ENCODE measurements at regions of chr19 and their contacts with region 1.

Region 1: DNA sequence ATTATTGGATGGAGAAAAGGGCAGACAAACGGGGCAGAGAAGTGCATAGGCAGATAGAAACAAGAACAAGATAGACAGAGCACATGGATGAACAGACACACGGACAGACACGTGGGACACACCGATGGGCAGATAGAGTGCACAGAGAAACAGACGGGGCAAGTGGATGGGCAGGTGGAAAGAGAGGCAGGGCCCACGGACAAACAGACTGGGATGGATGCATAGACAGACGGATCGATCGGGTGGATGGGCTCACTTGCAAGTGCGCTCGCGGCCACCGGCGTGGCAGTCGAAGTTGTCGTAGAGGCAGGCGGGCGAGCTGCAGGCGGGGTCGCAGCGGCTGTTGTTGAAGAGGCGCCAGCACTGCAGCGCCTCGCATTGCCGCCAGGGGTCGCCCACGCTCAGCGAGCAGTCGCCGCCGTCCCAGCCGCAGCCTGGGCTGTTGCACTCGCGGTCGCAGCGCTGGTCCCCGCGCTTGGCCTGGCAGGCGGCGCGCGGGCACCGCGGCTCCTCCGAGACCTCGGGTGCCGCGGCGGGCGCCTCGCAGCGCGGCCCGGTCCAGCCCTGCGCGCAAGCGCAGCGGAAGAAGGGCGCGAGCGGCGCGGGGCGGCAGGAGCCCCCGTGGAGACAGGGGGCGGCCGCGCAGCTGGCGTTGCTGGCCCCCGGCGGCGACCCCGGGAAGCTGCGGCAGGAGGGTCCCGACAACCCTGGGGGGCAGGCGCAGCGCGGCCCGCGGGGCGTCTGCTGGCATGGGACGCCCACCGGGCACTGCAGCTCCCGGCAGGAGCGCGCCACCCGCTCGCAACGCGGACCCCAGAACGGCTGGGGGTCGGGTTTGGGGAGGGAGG is 23.3 kb downstream of the NOTCH3 start:
- DNase-seq: peak; percentile 84
- H3K4me3 Mint-ChIP-seq: peak overlapping the region; percentile 24
- H3K27ac Mint-ChIP-seq: no peak overlapping the region
- H3K4me1 Mint-ChIP-seq: peaks cover 2% of the 10 kb centered on the region
- H3K27me3 Mint-ChIP-seq: peaks cover 3% of the 10 kb centered on the region

Region 2: DNA sequence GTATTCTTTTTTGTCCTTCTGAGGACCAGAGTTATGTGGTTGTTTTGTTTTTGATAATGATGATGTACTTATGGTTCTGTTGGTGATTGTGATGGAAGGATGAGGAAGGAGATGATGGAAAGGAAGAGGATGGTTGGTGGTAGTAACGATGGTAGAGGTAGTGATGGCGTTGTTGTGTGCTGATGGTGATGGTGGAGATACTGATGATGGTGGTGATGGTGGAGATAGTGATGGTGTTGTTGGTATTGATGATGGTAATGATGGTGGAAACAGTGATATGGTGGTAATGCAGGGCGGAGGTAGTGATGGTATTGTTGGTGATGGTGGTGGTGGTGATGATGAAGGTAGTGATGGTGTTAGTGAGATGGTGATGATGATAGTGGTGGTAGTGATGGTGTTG is 582.0 kb before region 1 on chr19:
- CTCF ChIA-PET with region 1: no interaction called
- intact Hi-C with region 1: no loop called
- DNase-seq: no peak
- H3K4me3 Mint-ChIP-seq: no peak overlapping the region
- H3K27ac Mint-ChIP-seq: no peak overlapping the region
- H3K4me1 Mint-ChIP-seq: no peaks in the 10 kb centered on the region
- H3K27me3 Mint-ChIP-seq: peaks cover 4% of the 10 kb centered on the region

Region 3: DNA sequence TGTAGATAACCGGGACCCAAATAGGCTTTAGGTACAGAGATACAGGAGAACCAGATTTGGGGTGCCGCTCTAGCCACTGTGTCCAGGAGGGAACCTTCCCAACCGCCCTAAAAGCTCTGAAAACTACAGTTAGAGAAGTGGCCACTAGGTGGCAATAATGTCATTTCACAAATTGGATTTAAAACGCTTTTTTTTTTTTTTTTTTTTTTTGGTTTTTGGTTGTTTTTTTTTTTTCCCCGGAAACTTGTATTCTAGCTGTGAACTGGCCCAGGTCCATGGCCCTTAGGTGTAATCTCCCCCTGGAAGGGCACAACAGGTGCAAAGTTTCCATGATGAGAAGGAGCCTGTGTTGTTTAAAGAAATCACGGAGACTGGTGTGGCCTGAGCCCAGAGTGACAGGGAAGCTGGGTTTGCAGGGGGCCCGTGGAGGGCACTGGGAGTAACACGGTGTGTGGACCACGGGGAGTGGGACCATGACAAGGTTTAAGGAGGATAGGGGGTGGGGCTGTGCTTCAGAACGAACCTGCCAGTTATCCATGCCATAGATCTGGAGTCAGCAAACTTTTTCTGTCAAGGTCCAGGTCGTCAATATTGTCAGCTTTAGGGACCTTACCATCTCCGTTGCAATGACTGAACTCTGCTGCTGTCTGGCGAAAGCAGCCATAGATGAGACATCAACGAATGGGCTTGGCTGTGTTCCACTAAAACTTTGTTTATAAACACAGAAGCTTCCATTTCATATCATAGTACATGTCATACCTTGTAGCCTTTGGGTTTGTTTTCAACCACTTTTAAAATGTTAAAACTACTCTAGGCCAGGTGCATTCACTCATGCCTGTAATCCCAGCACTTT is 85.4 kb before region 1 on chr19:
- CTCF ChIA-PET with region 1: interaction called, 5 read pairs
- intact Hi-C with region 1: loop called (anchors 5 kb)
- DNase-seq: peak; percentile 61
- H3K4me3 Mint-ChIP-seq: no peak overlapping the region
- H3K27ac Mint-ChIP-seq: no peak overlapping the region
- H3K4me1 Mint-ChIP-seq: peaks cover 2% of the 10 kb centered on the region
- H3K27me3 Mint-ChIP-seq: peaks cover 8% of the 10 kb centered on the region

Region 4: GRCh38 chr19:15188851-15189250 is 11.4 kb after region 1 on chr19:
- CTCF ChIA-PET with region 1: interaction called, 4 read pairs
- intact Hi-C with region 1: loop called (anchors 1 kb)
- DNase-seq: no peak
- H3K4me3 Mint-ChIP-seq: no peak overlapping the region
- H3K27ac Mint-ChIP-seq: no peak overlapping the region
- H3K4me1 Mint-ChIP-seq: no peaks in the 10 kb centered on the region
- H3K27me3 Mint-ChIP-seq: peaks cover 11% of the 10 kb centered on the region

Region 5: GRCh38 chr19:15234043-15234873 is 56.8 kb after region 1 on chr19:
- CTCF ChIA-PET with region 1: no interaction called
- intact Hi-C with region 1: loop called (anchors 5 kb)
- DNase-seq: no peak
- H3K4me3 Mint-ChIP-seq: no peak overlapping the region
- H3K27ac Mint-ChIP-seq: no peak overlapping the region
- H3K4me1 Mint-ChIP-seq: peaks cover 7% of the 10 kb centered on the region
- H3K27me3 Mint-ChIP-seq: peaks cover 25% of the 10 kb centered on the region

Region 6: DNA sequence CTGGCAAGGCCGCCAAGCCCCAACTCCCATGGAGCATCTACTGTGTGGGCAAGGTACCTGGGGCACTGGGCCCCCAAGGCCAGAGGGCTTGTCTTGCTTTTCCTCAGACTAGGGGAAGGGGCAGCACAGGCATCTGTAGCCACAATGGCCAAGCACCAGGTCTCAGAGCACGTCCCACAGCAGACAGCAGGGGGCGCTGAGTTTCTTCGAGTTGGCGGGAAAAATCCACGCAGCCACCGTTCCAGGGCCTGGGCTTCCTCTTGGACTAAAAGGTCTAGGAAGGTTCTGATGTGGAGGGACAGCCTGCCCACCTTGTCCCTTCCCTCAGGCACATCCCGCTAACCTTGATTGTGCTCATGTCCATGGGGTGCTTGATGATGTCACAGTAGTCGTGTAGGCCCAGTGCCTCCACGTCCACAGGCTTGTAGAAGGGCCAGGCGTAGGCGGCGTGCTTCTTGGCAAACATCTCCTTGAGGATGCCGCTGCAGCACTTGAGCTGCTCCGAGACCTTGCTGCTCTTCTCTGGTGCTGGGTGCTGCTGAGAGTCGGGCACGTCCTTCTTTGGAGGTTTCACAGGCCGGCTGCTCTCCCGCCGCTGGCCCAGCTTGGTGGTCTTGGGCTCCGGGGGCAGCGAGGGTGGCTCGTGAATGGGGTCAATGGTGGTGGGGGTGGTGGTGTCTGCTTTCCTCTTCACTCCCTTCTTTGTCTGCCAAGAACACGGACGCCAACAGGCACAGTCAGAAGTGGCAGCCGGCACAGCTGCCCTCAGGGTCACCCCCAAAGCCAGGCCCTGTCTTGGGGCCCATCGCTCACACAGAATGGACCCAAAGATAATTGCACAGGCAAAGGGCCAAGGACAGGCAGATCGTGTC is 86.8 kb after region 1 on chr19:
- CTCF ChIA-PET with region 1: no interaction called
- intact Hi-C with region 1: loop called (anchors 1 kb)
- DNase-seq: peak; percentile 82
- H3K4me3 Mint-ChIP-seq: no peak overlapping the region
- H3K27ac Mint-ChIP-seq: no peak overlapping the region
- H3K4me1 Mint-ChIP-seq: peaks cover 6% of the 10 kb centered on the region
- H3K27me3 Mint-ChIP-seq: no peaks in the 10 kb centered on the region

Region 7: GRCh38 chr19:15304140-15304705 is 126.7 kb after region 1 on chr19:
- CTCF ChIA-PET with region 1: no interaction called
- intact Hi-C with region 1: no loop called
- DNase-seq: peak; percentile 43
- H3K4me3 Mint-ChIP-seq: no peak overlapping the region
- H3K27ac Mint-ChIP-seq: peak overlapping the region; percentile 79
- H3K4me1 Mint-ChIP-seq: peaks cover 85% of the 10 kb centered on the region
- H3K27me3 Mint-ChIP-seq: no peaks in the 10 kb centered on the region

Region 8: GRCh38 chr19:15583346-15583745 is 405.9 kb after region 1 on chr19:
- CTCF ChIA-PET with region 1: no interaction called
- intact Hi-C with region 1: no loop called
- DNase-seq: no peak
- H3K4me3 Mint-ChIP-seq: no peak overlapping the region
- H3K27ac Mint-ChIP-seq: no peak overlapping the region
- H3K4me1 Mint-ChIP-seq: peaks cover 5% of the 10 kb centered on the region
- H3K27me3 Mint-ChIP-seq: peaks cover 9% of the 10 kb centered on the region